ENCODE measurements at regions of chr9 and their contacts with region 1.

Region 1: GRCh38 chr9:109012876-109013678 is at the start of gene CTNNAL1:
- DNase-seq: peak; percentile 86
- H3K4me3 Mint-ChIP-seq: peak within 1 kb of the TSS; percentile 95
- H3K27ac Mint-ChIP-seq: peak within 1 kb of the TSS; percentile 68
- H3K4me1 Mint-ChIP-seq: peaks cover 28% of the 10 kb centered on the region
- H3K27me3 Mint-ChIP-seq: no peaks in the 10 kb centered on the region
- total RNA-seq, gene CTNNAL1: 18.4 to 19.0 TPM

Region 2: DNA sequence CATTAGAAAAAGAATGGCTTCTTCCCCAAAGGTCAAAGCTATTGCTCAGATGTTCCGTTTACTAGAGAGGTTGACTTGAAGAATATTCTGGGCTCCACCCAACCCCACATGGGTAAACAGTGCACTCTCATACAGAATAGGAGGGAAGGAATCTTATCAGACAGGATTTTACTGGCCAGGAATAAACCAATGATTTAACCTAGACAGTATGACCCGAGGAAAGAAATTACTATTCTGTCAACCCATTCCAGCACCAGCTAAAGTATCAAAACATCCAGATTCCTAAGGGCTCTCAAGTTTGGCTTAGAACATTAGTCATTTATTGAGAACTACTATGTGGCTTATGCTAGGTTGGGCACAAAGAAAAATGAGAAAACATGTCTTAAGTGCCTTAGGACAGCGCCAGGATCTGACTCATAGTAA is 1029.9 kb before region 1 on chr9:
- CTCF ChIA-PET with region 1: no interaction called
- intact Hi-C with region 1: no loop called
- DNase-seq: no peak
- H3K4me3 Mint-ChIP-seq: no peak overlapping the region
- H3K27ac Mint-ChIP-seq: no peak overlapping the region
- H3K4me1 Mint-ChIP-seq: no peaks in the 10 kb centered on the region
- H3K27me3 Mint-ChIP-seq: peaks cover 5% of the 10 kb centered on the region

Region 3: GRCh38 chr9:109101810-109102209 is 88.7 kb after region 1 on chr9:
- CTCF ChIA-PET with region 1: no interaction called
- intact Hi-C with region 1: loop called (anchors 2 kb)
- DNase-seq: no peak
- H3K4me3 Mint-ChIP-seq: peak overlapping the region; percentile 37
- H3K27ac Mint-ChIP-seq: peak overlapping the region; percentile 75
- H3K4me1 Mint-ChIP-seq: peaks cover 64% of the 10 kb centered on the region
- H3K27me3 Mint-ChIP-seq: no peaks in the 10 kb centered on the region

Region 4: GRCh38 chr9:109437286-109437685 is 424.2 kb after region 1 on chr9:
- CTCF ChIA-PET with region 1: no interaction called
- intact Hi-C with region 1: no loop called
- DNase-seq: no peak
- H3K4me3 Mint-ChIP-seq: no peak overlapping the region
- H3K27ac Mint-ChIP-seq: no peak overlapping the region
- H3K4me1 Mint-ChIP-seq: peaks cover 16% of the 10 kb centered on the region
- H3K27me3 Mint-ChIP-seq: peaks cover 7% of the 10 kb centered on the region

Region 5: GRCh38 chr9:109880277-109881169 is 867.4 kb after region 1 on chr9:
- CTCF ChIA-PET with region 1: no interaction called
- intact Hi-C with region 1: loop called (anchors 10 kb)
- DNase-seq: peak; percentile 62
- H3K4me3 Mint-ChIP-seq: peak overlapping the region; percentile 43
- H3K27ac Mint-ChIP-seq: no peak overlapping the region
- H3K4me1 Mint-ChIP-seq: peaks cover 18% of the 10 kb centered on the region
- H3K27me3 Mint-ChIP-seq: peaks cover 5% of the 10 kb centered on the region